ENCODE measurements at regions of chr3 and their contacts with region 1.

Region 1: DNA sequence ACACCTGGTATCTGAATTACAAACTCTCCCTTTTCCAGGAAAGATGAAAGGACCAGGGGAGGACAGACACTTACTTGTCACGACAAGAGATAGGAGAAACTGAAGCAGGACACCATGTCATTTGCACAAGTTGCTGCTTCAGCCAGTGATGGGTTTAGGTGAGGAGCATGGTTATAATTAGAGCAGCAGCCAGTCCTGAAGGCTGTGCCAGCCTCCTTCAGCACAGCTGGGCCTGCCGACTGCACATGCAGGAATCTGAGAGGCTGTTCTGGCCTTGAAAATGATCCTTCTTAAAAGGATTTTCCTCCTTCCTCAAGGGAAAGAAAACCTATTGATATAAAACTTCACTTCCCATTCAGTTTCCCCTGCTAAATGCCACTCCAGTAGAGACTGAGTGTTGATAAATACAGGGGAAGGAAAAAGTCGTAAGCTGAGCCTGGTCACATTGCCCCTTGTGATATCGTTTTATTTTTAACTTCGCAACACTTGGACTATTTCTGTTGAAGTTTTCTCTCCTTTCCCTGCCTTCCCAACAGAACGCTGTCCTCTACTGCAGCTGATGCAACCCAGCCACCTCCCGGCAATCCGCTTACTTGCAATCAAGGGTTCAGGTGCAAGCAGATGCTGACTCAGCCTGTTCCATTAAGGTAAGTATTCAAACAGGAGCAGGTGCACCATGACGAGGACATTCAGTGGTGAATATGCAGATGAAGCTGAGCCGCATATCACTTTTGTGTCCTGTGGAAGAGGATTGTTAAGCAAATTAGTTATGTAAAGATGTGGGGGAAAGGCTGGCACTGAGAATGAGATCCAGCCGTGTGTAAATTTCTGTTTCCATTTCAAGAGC is at the start of gene FBXO40:
- DNase-seq: peak; percentile 68 to 84
- H3K4me3 ChIP-seq: peak within 1 kb of the TSS in 3 of 4 experiments; percentile 2 to 43 (median 23); a peak in 5 of 8 replicates
- H3K27ac ChIP-seq: peak within 1 kb of the TSS; percentile 92
- H3K4me1 ChIP-seq: peaks cover 5 to 22% (median 11%) of the 10 kb centered on the region in 4 experiments; a peak in 6 of 7 replicates
- H3K27me3 ChIP-seq: no peaks in the 10 kb centered on the region
- CTCF ChIP-seq: peak; percentile 27 to 61 (median 48); a peak in 3 of 4 replicates
- EP300 ChIP-seq: peak in 1 of 2 experiments; percentile 95; a peak in 2 of 3 replicates
- POLR2A ChIP-seq: peak; percentile 70 to 83
- RAD21 ChIP-seq: peak; percentile 54 to 77
- total RNA-seq, gene FBXO40: 0.06 TPM in 1 of 2 replicates, not detected in the other

Region 2: GRCh38 chr3:121477589-121477988 is 115.5 kb before region 1 on chr3:
- CTCF ChIA-PET with region 1: no interaction called
- POLR2A ChIA-PET with region 1: no interaction called
- DNase-seq: no peak
- H3K4me3 ChIP-seq: no peak overlapping the region
- H3K27ac ChIP-seq: no peak overlapping the region
- H3K4me1 ChIP-seq: no peaks in the 10 kb centered on the region
- H3K27me3 ChIP-seq: no peaks in the 10 kb centered on the region
- CTCF ChIP-seq: no peak
- EP300 ChIP-seq: no peak
- POLR2A ChIP-seq: no peak
- RAD21 ChIP-seq: no peak

Region 3: GRCh38 chr3:121581691-121582090 is 11.4 kb before region 1 on chr3:
- CTCF ChIA-PET with region 1: no interaction called
- POLR2A ChIA-PET with region 1: interaction called, 18 read pairs
- DNase-seq: no peak
- H3K4me3 ChIP-seq: no peak overlapping the region
- H3K27ac ChIP-seq: no peak overlapping the region
- H3K4me1 ChIP-seq: no peaks in the 10 kb centered on the region
- H3K27me3 ChIP-seq: no peaks in the 10 kb centered on the region
- CTCF ChIP-seq: no peak
- EP300 ChIP-seq: no peak
- POLR2A ChIP-seq: no peak
- RAD21 ChIP-seq: no peak

Measured in H1 (cell line).